HEK293 (cell line): ENCODE measurements at regions of chr10 and their contacts with region 1.

Region 1: DNA sequence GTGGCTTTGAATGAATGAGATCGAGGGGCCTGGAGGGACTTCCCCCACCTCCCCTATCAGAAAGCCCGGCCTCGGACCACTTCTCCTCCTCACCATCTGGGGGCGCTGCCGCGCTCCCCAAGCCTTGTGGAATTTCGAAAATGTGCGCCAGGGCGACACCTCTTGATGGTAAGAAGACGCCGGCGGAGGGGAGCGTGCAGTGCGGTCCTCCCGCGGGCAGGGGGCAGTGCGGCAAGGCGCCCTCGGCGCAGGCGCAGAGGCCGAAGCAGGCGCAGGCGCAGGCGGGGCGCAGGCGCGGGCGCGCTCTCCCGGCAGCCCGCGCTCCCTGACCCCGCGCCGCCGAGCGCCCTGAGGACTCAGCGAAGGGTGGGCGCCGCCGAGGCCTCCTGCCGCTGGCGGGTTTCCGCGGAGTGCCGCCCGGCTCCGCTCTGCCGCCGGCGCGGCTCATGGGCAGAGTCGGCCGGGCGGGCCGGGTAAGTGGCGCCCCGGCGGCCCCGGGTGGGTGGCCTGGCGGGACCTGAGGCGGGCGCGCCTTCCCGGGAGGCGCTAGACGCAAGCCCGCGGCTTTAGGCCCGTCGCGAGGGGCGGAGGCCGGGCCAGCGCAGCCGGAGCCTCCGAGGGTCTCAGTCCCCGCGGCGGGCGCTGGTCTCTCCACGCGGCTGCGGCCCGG is at the start of gene RBM17:
- H3K4me3 ChIP-seq: peak within 1 kb of the TSS; percentile 78
- H3K27ac ChIP-seq: peak within 1 kb of the TSS; percentile 91; the same call in 1 of the 2 replicates
- H3K4me1 ChIP-seq: peaks cover 8% of the 10 kb centered on the region; the same call in 1 of the 2 replicates
- CTCF ChIP-seq: peak; percentile 99

Region 2: DNA sequence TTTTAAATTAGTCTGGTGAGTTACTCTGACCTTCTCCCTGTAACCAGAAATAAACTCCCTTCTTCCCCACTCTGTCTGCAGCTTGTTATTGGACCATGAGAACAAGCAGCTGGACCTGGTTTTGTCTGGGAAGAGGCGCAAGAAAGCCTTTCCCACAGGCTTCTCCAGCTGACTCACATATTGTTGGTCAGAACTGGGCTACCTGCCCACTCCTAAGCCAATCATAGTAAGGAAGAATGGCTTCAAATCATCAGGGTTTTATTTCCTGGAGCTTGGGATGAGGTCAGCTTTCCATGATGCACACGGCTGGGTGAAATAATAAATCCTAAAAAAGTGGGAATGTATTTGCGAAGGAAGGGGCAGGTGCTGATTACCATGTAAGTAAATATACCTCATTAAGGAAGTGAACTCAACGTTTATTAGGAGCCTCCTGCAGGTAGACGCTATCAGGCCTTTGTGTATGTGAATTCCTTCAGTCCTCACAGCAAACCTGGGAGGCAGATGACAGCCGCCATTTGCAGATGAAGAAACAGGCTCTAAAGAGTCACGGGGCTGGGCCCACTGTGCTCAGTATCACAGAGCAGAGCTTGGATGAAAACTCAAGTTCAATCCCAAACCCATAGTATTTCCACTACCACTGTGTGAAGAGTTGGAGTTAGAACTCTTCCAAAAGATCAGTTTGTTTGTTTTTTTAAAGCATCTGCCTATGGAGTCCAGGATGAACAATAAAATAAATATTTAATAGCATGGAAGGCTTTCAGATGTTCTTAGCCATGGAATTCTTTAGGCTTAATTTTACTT is 144.3 kb before region 1 on chr10:
- CTCF ChIA-PET with region 1: no interaction called
- POLR2A ChIA-PET with region 1: no interaction called
- H3K4me3 ChIP-seq: no peak overlapping the region
- H3K27ac ChIP-seq: no peak overlapping the region
- H3K4me1 ChIP-seq: no peaks in the 10 kb centered on the region
- CTCF ChIP-seq: no peak

Region 3: DNA sequence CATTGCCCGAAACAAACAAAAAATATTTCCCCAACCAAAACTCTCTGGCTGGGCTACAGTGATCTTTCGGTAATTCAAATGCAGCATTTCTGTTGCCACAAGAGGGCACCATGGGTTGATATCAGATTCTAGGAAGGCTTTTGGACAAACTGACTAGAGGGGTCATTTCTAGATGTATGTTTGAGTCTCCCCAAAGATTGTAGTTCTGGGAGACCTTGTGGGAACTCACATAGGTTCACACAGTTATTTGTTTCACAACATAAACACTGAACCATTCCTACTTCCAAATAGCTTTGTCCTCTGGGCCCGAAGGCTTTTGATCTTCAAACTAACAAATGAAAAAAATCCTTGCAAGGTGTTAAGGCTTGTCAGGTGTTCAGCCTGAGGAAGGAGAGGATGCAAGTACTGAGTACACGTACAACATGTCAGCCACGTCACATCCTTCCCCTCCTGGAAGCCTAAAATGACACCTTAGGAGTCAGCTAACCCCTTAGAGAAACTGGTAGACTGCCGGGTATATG is 74.6 kb before region 1 on chr10:
- CTCF ChIA-PET with region 1: interaction called, 21 read pairs
- POLR2A ChIA-PET with region 1: no interaction called
- H3K4me3 ChIP-seq: no peak overlapping the region
- H3K27ac ChIP-seq: no peak overlapping the region
- H3K4me1 ChIP-seq: no peaks in the 10 kb centered on the region
- CTCF ChIP-seq: no peak

Region 4: GRCh38 chr10:6072215-6072934 is 16.5 kb before region 1 on chr10:
- CTCF ChIA-PET with region 1: interaction called, 17 read pairs
- POLR2A ChIA-PET with region 1: no interaction called
- H3K4me3 ChIP-seq: no peak overlapping the region
- H3K27ac ChIP-seq: no peak overlapping the region
- H3K4me1 ChIP-seq: no peaks in the 10 kb centered on the region
- CTCF ChIP-seq: no peak

Region 5: GRCh38 chr10:6136215-6137201 is 47.7 kb after region 1 on chr10:
- CTCF ChIA-PET with region 1: interaction called, 13 read pairs
- POLR2A ChIA-PET with region 1: no interaction called
- H3K4me3 ChIP-seq: no peak overlapping the region
- H3K27ac ChIP-seq: no peak overlapping the region
- H3K4me1 ChIP-seq: no peaks in the 10 kb centered on the region
- CTCF ChIP-seq: no peak

Region 6: GRCh38 chr10:6320320-6321010 is 231.6 kb after region 1 on chr10:
- CTCF ChIA-PET with region 1: no interaction called
- POLR2A ChIA-PET with region 1: no interaction called
- H3K4me3 ChIP-seq: no peak overlapping the region
- H3K27ac ChIP-seq: no peak overlapping the region
- H3K4me1 ChIP-seq: no peaks in the 10 kb centered on the region
- CTCF ChIP-seq: no peak